IMR-90 (cell line): ENCODE measurements at regions of chr17 and their contacts with region 1.

Region 1: GRCh38 chr17:35587074-35587971 is at the start of gene AP2B1:
- DNase-seq: peak; percentile 96
- ATAC-seq: peak; percentile 85
- H3K4me3 ChIP-seq: peak within 1 kb of the TSS; percentile 66
- H3K27ac ChIP-seq: peak within 1 kb of the TSS; percentile 90
- H3K4me1 ChIP-seq: 0 out of 2 replicates have a peak, but pooled peaks cover 2% of the 10 kb centered on the region
- H3K27me3 ChIP-seq: no peaks in the 10 kb centered on the region
- CTCF ChIP-seq: no peak
- POLR2A ChIP-seq: peak; percentile 87
- RAD21 ChIP-seq: no peak
- total RNA-seq, gene AP2B1: 95.3 and 125 TPM in 2 replicates

Region 2: DNA sequence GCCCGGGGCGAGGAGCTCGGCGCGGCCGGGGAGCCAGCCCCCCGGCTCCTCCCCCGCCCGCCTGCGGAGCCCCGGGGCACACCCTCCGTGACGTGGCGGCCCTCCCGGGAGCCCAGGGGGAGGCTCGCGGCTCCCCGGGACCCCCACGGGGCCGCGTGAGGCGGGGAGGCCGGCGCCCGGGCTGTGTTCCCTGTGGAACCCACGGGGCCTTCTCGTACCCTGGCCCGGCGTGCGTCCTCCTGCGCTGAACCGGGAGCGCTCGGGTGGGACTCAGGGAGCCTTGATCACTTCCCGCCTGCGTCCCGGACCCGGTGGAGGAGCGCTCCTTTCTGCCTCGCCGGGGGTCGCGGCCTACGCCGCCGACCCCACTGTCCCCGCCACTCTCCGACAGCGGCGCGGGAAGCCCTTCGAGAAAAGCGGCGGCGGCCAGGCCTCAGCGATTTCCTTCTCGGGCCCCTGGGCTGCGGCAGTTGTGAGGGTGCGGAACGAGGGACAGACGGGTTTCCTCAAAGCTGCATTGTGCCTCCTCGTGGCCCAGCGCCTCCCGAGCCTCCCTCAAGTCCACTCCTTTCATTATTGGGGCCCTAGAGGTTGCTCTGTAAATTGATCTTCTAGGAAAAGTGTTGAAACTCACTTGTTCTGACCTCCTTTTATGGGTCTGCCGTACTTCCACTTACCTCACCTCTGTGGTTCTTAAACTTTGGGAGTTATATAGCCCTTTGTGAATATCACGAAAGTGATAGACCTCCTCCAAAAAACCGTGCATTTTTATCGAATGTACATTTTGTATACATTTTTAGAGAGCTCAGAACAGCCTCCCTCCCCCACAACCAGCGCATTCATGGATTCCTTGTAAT is 606.4 kb before region 1 on chr17:
- CTCF ChIA-PET with region 1: interaction called, 4 read pairs
- POLR2A ChIA-PET with region 1: no interaction called
- dilution Hi-C with region 1: no loop called
- in situ Hi-C with region 1: loop called (anchors 25 kb)
- intact Hi-C with region 1: no loop called
- DNase-seq: peak; percentile 80
- ATAC-seq: peak; percentile 94
- H3K4me3 ChIP-seq: peak overlapping the region; percentile 91
- H3K27ac ChIP-seq: peak overlapping the region; percentile 96
- H3K4me1 ChIP-seq: peaks cover 7% of the 10 kb centered on the region
- H3K27me3 ChIP-seq: no peaks in the 10 kb centered on the region
- CTCF ChIP-seq: peak; percentile 50
- POLR2A ChIP-seq: peak; percentile 77
- RAD21 ChIP-seq: peak; percentile 36

Region 3: DNA sequence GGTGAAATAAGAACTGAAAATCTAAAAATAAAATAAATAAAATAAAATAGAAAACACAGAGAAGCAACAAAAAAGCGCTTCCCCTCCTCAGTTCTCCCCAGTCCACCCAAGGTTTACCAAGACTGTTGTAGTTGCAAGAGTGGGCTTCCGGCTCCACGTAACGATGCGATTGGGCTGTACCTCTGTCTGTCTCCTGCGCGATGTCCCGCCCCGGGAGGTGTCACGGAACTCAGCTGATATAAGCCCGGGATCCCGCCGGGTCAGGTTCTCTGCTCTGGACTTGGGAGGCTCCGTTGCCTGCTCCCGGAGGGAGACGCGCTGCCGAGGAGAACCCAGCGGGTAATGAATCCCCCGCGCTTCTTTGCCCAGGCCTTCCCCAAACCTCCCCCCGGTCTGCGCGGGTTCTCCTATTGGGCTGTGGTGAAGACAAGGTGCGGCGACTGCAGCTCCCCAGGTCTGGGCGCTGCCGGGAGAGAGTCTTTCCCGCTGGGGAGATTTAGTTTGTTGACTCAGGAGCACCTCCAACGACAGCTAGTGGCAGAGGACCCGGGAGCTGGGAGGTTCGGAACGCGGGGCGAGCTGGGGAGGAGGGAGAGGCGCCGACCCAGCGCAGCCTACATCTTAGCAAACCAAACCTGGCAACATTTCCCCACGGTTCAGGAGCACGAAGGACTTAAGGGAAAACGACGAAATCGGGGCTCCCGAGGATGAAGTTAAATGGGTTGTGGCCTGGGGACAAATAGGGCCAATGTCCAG is 344.3 kb before region 1 on chr17 and contains the start of gene SLFN5:
- CTCF ChIA-PET with region 1: no interaction called
- POLR2A ChIA-PET with region 1: no interaction called
- dilution Hi-C with region 1: no loop called
- in situ Hi-C with region 1: no loop called
- intact Hi-C with region 1: loop called (anchors 2 kb)
- DNase-seq: peak; percentile 90
- ATAC-seq: peak; percentile 79
- H3K4me3 ChIP-seq: peak within 1 kb of the TSS; percentile 59
- H3K27ac ChIP-seq: peak within 1 kb of the TSS; percentile 85
- H3K4me1 ChIP-seq: peaks cover 5% of the 10 kb centered on the region
- H3K27me3 ChIP-seq: no peaks in the 10 kb centered on the region
- CTCF ChIP-seq: no peak
- POLR2A ChIP-seq: peak; percentile 99
- RAD21 ChIP-seq: 0 out of 2 replicates have a peak, but pooled peaks have one; percentile 5
- total RNA-seq, gene SLFN5: 48.9 and 64.2 TPM in 2 replicates

Region 4: DNA sequence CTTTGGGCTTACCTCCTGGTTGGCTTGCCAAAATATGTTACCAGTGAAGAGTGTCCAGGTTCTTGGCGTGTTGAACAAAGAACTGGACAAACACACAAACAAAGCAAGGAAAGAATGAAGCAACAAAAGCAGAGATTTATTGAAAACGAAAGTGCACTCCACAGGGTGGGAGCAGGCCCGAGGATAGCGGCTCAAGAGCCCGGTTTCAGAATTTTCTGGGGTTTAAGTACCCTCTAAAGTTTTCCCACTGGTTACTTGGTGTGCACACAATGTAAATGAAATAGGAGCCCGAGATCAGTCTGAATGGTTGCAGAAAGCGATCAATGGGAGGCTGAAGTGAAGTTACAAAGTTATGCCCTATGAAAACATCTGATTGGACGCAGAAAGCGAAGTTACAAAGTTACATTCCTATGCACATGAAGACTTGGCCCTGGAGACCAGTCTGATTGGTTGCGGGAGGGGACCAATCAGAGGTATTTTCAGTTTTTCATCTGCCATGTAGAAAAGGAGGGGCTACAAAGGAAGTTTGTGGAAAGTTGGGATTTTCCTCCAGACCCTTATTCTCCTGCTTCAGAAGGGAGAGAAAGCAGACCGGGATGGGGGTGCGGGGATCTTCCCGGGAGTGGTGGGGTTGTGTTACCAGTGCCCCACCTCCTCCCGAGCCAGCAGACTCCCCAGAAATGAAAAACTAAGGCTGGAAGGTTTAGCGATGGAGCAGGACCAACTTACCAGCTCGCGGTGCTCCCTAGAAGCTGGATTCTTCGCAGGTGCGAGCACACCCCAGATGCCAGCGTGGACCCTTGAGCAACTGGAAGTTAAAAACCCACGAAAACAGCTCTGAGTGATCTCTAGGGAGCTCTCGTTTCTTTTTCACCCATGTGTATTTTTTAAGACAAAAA is 154.9 kb before region 1 on chr17 and contains the start of gene SLFN12:
- CTCF ChIA-PET with region 1: no interaction called
- POLR2A ChIA-PET with region 1: no interaction called
- dilution Hi-C with region 1: no loop called
- in situ Hi-C with region 1: no loop called
- intact Hi-C with region 1: loop called (anchors 2 kb)
- DNase-seq: peak; percentile 98
- ATAC-seq: peak; percentile 78
- H3K4me3 ChIP-seq: peak within 1 kb of the TSS; percentile 59
- H3K27ac ChIP-seq: peak within 1 kb of the TSS; percentile 92
- H3K4me1 ChIP-seq: peaks cover 1% of the 10 kb centered on the region; the same call in 1 of the 2 replicates
- H3K27me3 ChIP-seq: no peaks in the 10 kb centered on the region
- CTCF ChIP-seq: no peak
- POLR2A ChIP-seq: peak; percentile 83; the same call in 1 of the 2 replicates
- RAD21 ChIP-seq: no peak
- total RNA-seq, gene SLFN12: 38.9 and 48.6 TPM in 2 replicates

Region 5: GRCh38 chr17:35630530-35631148 is 43.3 kb after region 1 on chr17:
- CTCF ChIA-PET with region 1: no interaction called
- POLR2A ChIA-PET with region 1: no interaction called
- dilution Hi-C with region 1: no loop called
- in situ Hi-C with region 1: no loop called
- intact Hi-C with region 1: loop called (anchors 5 kb)
- DNase-seq: peak; percentile 80
- ATAC-seq: peak; percentile 75
- H3K4me3 ChIP-seq: no peak overlapping the region
- H3K27ac ChIP-seq: no peak overlapping the region
- H3K4me1 ChIP-seq: peaks cover 5% of the 10 kb centered on the region; the same call in 1 of the 2 replicates
- H3K27me3 ChIP-seq: no peaks in the 10 kb centered on the region
- CTCF ChIP-seq: no peak
- POLR2A ChIP-seq: no peak
- RAD21 ChIP-seq: no peak

Region 6: DNA sequence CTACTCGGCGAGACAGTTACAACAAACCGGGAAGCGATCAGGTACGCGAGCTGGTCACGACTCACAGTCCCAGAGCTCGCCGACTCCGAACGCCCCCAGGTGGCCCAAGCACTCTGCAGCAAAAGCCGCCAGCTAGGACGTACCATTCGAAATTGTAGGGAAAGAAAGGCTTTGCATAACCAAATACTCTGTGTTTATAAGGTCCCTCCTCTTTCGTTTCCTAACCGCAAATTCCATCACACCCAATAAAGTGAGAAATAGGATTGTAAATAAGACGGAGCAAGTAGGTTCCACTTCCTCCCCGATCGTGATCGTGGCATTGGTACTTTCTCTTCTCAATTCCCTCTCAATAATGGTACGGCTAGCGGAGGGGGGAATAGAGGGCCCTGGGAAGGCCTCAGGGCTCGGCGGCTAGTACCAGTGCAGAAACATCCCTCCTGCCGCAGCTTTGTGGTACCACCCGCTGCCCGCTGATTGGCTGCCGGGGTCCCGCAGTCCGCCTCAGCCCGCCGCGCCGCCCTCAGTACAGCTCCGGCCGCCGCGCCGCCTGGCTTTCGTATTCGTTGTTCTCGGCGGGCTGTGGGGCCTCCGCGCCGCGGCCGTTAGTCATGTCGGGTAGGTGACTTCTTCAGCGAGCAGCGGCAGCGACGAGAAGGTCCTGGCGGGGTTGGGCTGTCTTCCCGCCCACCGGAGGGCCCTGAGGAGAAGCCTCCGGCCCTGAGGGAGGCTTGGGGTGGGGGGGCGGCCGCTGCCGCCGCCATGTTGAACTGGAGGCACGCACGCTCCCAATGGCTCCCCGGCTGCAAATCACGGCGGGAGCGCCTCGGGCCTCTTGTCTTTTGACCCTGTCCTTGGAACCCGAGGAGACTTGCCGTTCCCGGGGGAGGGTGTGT is 221.9 kb after region 1 on chr17 and contains the start of gene TAF15:
- CTCF ChIA-PET with region 1: interaction called, 3 read pairs
- POLR2A ChIA-PET with region 1: no interaction called
- dilution Hi-C with region 1: no loop called
- in situ Hi-C with region 1: no loop called
- intact Hi-C with region 1: loop called (anchors 1 kb)
- DNase-seq: peak; percentile 99
- ATAC-seq: peak; percentile 93
- H3K4me3 ChIP-seq: peak within 1 kb of the TSS; percentile 83
- H3K27ac ChIP-seq: peak within 1 kb of the TSS; percentile 91
- H3K4me1 ChIP-seq: peaks cover 10% of the 10 kb centered on the region
- H3K27me3 ChIP-seq: no peaks in the 10 kb centered on the region
- CTCF ChIP-seq: peak; percentile 76
- POLR2A ChIP-seq: peak; percentile 99
- RAD21 ChIP-seq: peak; percentile 61
- total RNA-seq, gene TAF15: 46.8 and 47.2 TPM in 2 replicates